HepG2 (cell line): ENCODE measurements at regions of chr2 and their contacts with region 1.

Region 1: GRCh38 chr2:152354909-152355308 is 19.9 kb downstream of the FMNL2 start:
- DNase-seq: no peak
- ATAC-seq: no peak
- H3K4me3 ChIP-seq: peak overlapping the region in 1 of 3 experiments; percentile 8; a peak in 1 of 6 replicates
- H3K27ac ChIP-seq: peak overlapping the region; percentile 56
- H3K4me1 ChIP-seq: peaks cover 88% of the 10 kb centered on the region
- H3K27me3 ChIP-seq: no peaks in the 10 kb centered on the region
- CTCF ChIP-seq: no peak
- EP300 ChIP-seq: no peak
- POLR2A ChIP-seq: no peak
- RAD21 ChIP-seq: no peak

Region 2: GRCh38 chr2:152383702-152384101 is 28.8 kb after region 1 on chr2:
- CTCF ChIA-PET with region 1: no interaction called
- POLR2A ChIA-PET with region 1: no interaction called
- in situ Hi-C with region 1: no loop called
- intact Hi-C with region 1: loop called (anchors 2 kb)
- DNase-seq: no peak
- ATAC-seq: no peak
- H3K4me3 ChIP-seq: no peak overlapping the region
- H3K27ac ChIP-seq: no peak overlapping the region
- H3K4me1 ChIP-seq: peaks cover 52% of the 10 kb centered on the region
- H3K27me3 ChIP-seq: no peaks in the 10 kb centered on the region
- CTCF ChIP-seq: no peak
- EP300 ChIP-seq: no peak
- POLR2A ChIP-seq: no peak
- RAD21 ChIP-seq: no peak

Region 3: DNA sequence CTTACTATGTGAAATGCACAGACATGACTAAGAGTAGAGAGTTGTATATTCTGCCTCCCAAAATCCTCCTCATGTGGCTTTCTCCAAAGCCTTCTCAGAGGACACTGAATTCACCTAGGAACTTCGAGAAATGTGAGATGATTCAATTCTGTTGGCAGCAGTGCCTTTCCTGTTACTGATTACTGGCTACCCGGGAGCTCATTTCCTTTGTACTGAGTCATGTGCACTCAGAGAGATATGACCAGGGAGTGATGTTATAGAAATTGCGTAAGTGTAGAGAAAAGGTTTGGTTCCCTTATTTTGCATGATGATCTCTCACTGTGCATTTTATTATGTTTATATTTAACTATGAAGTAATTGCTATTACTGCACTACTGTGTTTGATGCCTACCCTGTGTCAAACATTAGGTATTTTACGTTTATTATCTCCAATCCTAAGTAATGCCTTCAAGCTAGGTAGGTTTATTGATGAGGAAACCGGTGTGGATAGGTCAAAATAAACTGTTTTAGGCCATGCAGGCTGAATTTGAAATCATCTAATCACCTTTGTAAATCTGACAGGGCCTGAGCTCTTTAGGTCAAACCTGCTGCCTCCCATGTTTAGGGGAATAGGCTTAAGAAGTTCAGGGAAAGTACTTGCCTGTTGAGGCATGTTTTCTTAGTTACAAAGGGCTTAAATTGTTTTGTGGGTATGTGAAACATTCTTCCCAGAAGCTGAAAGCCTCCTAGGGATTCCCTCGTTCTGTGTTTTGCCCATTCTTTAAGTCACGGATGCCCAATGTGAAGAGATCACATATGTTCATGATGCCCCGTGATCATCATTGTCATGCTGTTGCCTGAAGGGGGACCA is 66.8 kb after region 1 on chr2:
- CTCF ChIA-PET with region 1: no interaction called
- POLR2A ChIA-PET with region 1: no interaction called
- in situ Hi-C with region 1: no loop called
- intact Hi-C with region 1: loop called (anchors 5 kb)
- DNase-seq: peak; percentile 89
- ATAC-seq: peak; percentile 74
- H3K4me3 ChIP-seq: no peak overlapping the region
- H3K27ac ChIP-seq: peak overlapping the region; percentile 11
- H3K4me1 ChIP-seq: peaks cover 73% of the 10 kb centered on the region
- H3K27me3 ChIP-seq: no peaks in the 10 kb centered on the region
- CTCF ChIP-seq: no peak
- EP300 ChIP-seq: peak in 1 of 2 experiments; percentile 65; a peak in 2 of 4 replicates
- POLR2A ChIP-seq: no peak
- RAD21 ChIP-seq: no peak